Breast epithelium (tissue), 4 donors: ENCODE measurements at regions of chrX and their contacts with region 1.

Region 1: DNA sequence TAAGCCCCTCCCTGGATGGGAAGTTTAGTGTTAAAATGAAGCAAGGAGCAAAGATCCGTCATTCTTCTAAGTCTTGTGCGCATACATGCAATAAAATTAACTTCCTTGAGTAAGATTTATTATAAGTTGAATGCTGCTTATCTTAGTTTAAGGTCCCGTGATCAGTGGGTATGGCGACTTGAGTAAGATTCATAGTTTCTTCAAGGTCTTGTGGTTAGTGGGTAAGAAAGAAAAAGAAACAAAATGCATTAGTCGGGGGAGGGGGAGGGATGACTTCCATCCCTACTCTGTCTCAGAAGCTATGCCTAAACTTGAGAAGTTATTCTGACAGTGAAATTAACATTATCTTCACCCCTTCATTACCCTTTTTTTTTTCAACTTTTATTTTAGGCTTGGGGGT is 127.3 kb upstream of the MAGEB16 start:
- DNase-seq: no peak
- H3K4me3 ChIP-seq: no peak overlapping the region
- H3K27ac ChIP-seq: no peak overlapping the region
- H3K4me1 ChIP-seq: no peaks in the 10 kb centered on the region
- H3K27me3 ChIP-seq: peaks cover 0 to 6% of the 10 kb centered on the region in 2 donors
- CTCF ChIP-seq: no peak
- POLR2A ChIP-seq: no peak

Region 2: GRCh38 chrX:33855251-33855650 is 1815.6 kb before region 1 on chrX:
- intact Hi-C with region 1: loop called (anchors 5 kb)
- DNase-seq: no peak
- H3K4me3 ChIP-seq: no peak overlapping the region
- H3K27ac ChIP-seq: no peak overlapping the region
- H3K4me1 ChIP-seq: no peaks in the 10 kb centered on the region
- H3K27me3 ChIP-seq: peaks cover 0 to 4% of the 10 kb centered on the region in 2 donors
- CTCF ChIP-seq: no peak
- POLR2A ChIP-seq: no peak

Region 3: GRCh38 chrX:36431809-36432208 is 760.9 kb after region 1 on chrX:
- intact Hi-C with region 1: no loop called
- DNase-seq: no peak
- H3K4me3 ChIP-seq: no peak overlapping the region
- H3K27ac ChIP-seq: no peak overlapping the region
- H3K4me1 ChIP-seq: no peaks in the 10 kb centered on the region
- H3K27me3 ChIP-seq: peaks cover 0 to 11% of the 10 kb centered on the region in 2 donors
- CTCF ChIP-seq: no peak
- POLR2A ChIP-seq: no peak